Right cardiac atrium (tissue), 5 donors: ENCODE measurements at regions of chr16 and their contacts with region 1.

Region 1: DNA sequence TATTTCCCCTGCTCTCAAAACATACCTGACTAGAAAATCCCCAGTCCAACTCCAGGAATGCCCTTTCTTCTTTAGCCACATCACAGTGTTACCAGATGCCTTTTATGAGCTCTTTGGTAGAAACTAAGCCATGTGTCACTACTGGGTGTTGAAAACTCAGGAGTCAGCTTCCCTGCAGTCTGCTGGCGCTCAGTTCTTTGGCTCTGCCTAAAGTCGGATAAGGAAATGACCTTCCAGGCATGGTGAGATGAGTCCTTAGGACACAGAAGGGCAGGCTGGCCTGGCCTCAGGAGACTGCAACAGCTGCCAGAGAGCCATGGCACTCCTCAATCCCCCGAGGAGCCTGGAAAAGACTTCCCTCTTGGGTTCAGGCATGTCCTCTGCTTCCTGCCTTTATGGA is 89.1 kb downstream of the CDH13 start:
- DNase-seq: peak; percentile 35 to 80 (median 78)
- ATAC-seq: peak; percentile 91 to 93
- H3K4me3 ChIP-seq: no peak overlapping the region
- H3K27ac ChIP-seq: peak overlapping the region; percentile 95
- H3K4me1 ChIP-seq: peaks cover 19% of the 10 kb centered on the region
- H3K27me3 ChIP-seq: no peaks in the 10 kb centered on the region

Region 2: GRCh38 chr16:82639666-82640336 is 76.0 kb before region 1 on chr16:
- intact Hi-C with region 1: loop called in 1 of 4 experiments (anchors 10 kb)
- DNase-seq: peak; percentile 48 to 81 (median 78)
- ATAC-seq: peak; percentile 66 to 75
- H3K4me3 ChIP-seq: no peak overlapping the region
- H3K27ac ChIP-seq: no peak overlapping the region
- H3K4me1 ChIP-seq: peaks cover 4% of the 10 kb centered on the region
- H3K27me3 ChIP-seq: no peaks in the 10 kb centered on the region

Region 3: DNA sequence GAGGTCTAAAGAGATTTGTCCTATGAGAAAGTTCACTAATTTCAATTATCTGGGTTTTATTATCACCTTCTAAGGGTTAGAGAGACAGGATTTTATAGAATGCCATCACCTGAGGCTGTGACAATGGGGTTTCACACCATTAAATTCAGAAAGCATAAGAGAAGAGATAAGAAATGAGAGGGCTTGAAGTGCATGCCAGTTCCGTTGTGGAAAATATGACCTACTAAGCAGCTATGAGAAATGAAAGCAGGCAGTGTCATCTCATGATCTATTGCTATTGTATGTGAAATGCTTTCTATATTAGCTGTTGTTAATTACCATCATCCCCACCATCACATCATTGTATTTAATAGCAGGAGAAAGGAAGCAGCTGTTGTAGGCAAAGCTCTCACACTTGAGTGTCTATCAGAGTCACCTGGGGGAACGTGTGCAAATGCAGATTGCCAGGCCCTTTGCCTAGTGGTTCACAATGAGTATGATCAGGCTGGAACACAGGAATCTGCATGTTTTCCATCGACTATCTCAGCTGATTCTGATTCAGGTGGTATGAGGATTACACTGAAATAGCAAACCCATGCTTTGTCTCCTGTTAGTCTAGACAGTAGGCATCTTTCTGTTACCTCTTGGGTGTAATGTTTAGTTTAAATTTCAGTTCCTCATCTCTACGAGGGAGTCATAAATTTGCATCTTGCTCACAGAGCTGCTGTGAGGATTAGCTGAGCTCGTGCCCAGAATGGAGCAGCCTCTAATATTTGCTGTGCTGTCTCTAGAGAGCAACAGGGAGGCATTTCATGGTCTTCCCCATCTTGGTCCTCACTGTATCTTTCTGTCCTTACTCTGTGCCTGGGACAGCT is 167.4 kb after region 1 on chr16:
- intact Hi-C with region 1: no loop called
- DNase-seq: no peak
- ATAC-seq: peak in 1 of 2 donors; percentile 33
- H3K4me3 ChIP-seq: no peak overlapping the region
- H3K27ac ChIP-seq: no peak overlapping the region
- H3K4me1 ChIP-seq: peaks cover 3% of the 10 kb centered on the region
- H3K27me3 ChIP-seq: no peaks in the 10 kb centered on the region